Ovary (tissue), 10 donors: ENCODE measurements at regions of chr20 and their contacts with region 1.

Region 1: GRCh38 chr20:33647603-33648395 is 14.3 kb upstream of the C20orf144 start:
- DNase-seq: no peak
- H3K4me3 ChIP-seq: no peak overlapping the region
- H3K27ac ChIP-seq: no peak overlapping the region
- H3K4me1 ChIP-seq: peaks cover 5% of the 10 kb centered on the region
- H3K27me3 ChIP-seq: no peaks in the 10 kb centered on the region
- CTCF ChIP-seq: no peak
- EP300 ChIP-seq: no peak
- POLR2A ChIP-seq: no peak

Region 2: DNA sequence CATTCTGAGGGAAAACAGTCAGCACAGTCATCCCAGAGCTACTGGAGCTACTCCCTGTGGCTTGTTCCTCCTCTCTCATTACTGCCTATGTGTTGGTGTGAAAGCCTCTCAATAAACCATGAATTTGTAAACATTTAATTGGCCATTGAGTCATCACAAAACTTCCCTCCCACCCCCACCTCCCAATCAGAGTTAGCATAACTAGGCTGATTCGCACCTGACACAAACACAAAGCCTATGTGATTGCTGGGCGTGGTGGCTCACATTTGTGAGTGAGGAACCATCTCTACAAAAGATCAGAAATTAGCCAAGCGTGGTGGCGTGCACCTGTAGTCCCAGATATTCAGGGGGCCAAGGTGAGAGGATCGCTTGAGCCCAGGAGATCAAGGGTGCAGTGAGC is 187.1 kb before region 1 on chr20:
- intact Hi-C with region 1: loop called in 2 of 4 experiments (anchors 5 to 10 kb)
- DNase-seq: no peak
- H3K4me3 ChIP-seq: no peak overlapping the region
- H3K27ac ChIP-seq: no peak overlapping the region
- H3K4me1 ChIP-seq: no peaks in the 10 kb centered on the region
- H3K27me3 ChIP-seq: no peaks in the 10 kb centered on the region
- CTCF ChIP-seq: no peak
- EP300 ChIP-seq: no peak
- POLR2A ChIP-seq: no peak

Region 3: DNA sequence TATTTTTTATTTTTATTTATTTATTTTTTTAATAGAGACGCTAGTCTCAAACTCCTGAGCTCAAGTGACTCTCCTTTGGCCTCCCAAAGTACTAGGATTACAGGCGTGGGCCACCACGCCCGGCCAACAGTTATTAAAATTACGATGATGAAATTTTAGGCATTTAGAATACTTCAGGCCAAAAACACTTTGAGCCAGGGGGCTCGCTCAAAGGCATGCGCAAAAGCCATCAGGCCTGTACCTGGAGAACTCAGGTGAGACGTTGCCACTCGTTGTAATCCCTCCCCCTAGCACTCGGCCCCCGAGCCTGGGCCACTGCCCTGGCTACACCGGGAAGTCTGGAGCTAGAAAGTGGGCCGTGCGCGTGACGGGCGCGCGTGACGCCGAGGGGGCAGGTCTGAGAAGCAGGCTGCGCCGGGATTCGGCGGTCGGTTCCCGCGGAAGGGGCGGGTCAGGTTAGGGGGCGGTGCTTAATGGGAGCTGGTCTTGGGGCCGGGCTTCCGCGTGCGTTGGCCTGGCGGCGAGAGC is 158.2 kb before region 1 on chr20:
- intact Hi-C with region 1: loop called in 1 of 4 experiments (anchors 10 kb)
- DNase-seq: peak; percentile 100
- H3K4me3 ChIP-seq: peak overlapping the region; percentile 45
- H3K27ac ChIP-seq: peak overlapping the region; percentile 86 to 94
- H3K4me1 ChIP-seq: peaks cover 6% of the 10 kb centered on the region
- H3K27me3 ChIP-seq: no peaks in the 10 kb centered on the region
- CTCF ChIP-seq: no peak
- EP300 ChIP-seq: peak; percentile 86
- POLR2A ChIP-seq: peak; percentile 98

Region 4: DNA sequence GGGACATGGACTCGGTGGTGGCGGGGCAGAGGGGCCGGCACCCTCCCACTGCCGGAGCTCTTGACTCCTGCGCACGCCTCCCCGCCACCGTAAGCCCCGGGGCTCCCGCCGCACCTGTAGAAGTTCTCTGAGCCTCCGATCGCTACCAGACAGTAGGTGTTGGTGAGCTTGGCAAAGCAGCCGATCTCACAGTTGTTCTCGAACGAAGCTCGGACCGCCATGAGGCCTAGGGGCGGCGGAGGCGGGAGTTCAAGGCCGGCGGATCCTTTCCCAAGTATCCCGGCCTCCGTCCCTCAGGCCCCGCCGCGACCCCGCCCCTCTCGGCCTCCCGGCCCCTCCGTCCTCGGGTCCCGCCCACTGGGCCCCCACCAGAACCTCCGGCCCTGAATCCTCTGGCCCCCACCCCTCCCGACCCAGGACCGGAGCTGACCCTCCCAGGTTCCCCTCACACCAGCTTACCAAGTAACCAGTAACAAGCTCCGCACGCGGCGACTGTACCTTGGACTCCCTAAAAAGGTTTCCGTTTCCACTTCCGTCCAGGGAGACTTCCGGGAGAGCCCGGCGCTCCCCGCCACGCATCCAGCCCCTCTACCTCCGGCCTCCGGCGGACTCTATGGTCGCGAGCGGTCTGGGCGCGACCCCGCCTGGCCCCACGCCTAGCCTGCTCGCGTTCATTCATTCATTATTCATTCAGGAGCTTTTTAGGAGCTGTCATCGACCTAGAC is 1636.6 kb after region 1 on chr20 and contains the start of gene EIF6:
- intact Hi-C with region 1: no loop called
- DNase-seq: peak; percentile 79 to 91 (median 82)
- H3K4me3 ChIP-seq: peak within 1 kb of the TSS; percentile 78
- H3K27ac ChIP-seq: peak within 1 kb of the TSS; percentile 50 to 60
- H3K4me1 ChIP-seq: peaks cover 6% of the 10 kb centered on the region
- H3K27me3 ChIP-seq: no peaks in the 10 kb centered on the region
- CTCF ChIP-seq: no peak
- EP300 ChIP-seq: no peak
- POLR2A ChIP-seq: no peak
- total RNA-seq, gene EIF6: 36.6 to 93.1 (median 69.8) TPM